HAP-1 (cell line): ENCODE measurements at regions of chr15 and their contacts with region 1.

Region 1: GRCh38 chr15:37891766-37892368 is 42.6 kb upstream of the TMCO5A start:
- DNase-seq: peak; percentile 35 to 72
- H3K4me3 ChIP-seq: no peak overlapping the region
- H3K4me1 ChIP-seq: no peaks in the 10 kb centered on the region
- H3K27me3 ChIP-seq: 0 out of 2 replicates have a peak, but pooled peaks cover 5% of the 10 kb centered on the region

Region 2: GRCh38 chr15:36883713-36884517 is 1008.0 kb before region 1 on chr15:
- in situ Hi-C with region 1: loop called (anchors 25 kb)
- DNase-seq: peak; percentile 82 to 96
- H3K4me3 ChIP-seq: 0 out of 2 replicates have a peak overlapping the region, but pooled peaks have one; percentile 1
- H3K4me1 ChIP-seq: peaks cover 17% of the 10 kb centered on the region
- H3K27me3 ChIP-seq: peaks cover 2% of the 10 kb centered on the region; the same call in 1 of the 2 replicates